Breast epithelium (tissue), 4 donors: ENCODE measurements at regions of chr15 and their contacts with region 1.

Region 1: GRCh38 chr15:89430530-89431341 is 65.6 kb downstream of the RHCG start:
- DNase-seq: peak; percentile 64 to 91
- H3K4me3 ChIP-seq: peak overlapping the region; percentile 26 to 50 (median 46)
- H3K27ac ChIP-seq: no peak overlapping the region
- H3K4me1 ChIP-seq: no peaks in the 10 kb centered on the region
- H3K27me3 ChIP-seq: peaks cover 0 to 6% of the 10 kb centered on the region in 2 donors
- CTCF ChIP-seq: peak; percentile 94 to 99 (median 97)
- POLR2A ChIP-seq: no peak

Region 2: GRCh38 chr15:88881775-88882174 is 549.0 kb before region 1 on chr15:
- intact Hi-C with region 1: loop called (anchors 2 kb)
- DNase-seq: no peak
- H3K4me3 ChIP-seq: no peak overlapping the region
- H3K27ac ChIP-seq: no peak overlapping the region
- H3K4me1 ChIP-seq: no peaks in the 10 kb centered on the region
- H3K27me3 ChIP-seq: no peaks in the 10 kb centered on the region
- CTCF ChIP-seq: no peak
- POLR2A ChIP-seq: no peak

Region 3: DNA sequence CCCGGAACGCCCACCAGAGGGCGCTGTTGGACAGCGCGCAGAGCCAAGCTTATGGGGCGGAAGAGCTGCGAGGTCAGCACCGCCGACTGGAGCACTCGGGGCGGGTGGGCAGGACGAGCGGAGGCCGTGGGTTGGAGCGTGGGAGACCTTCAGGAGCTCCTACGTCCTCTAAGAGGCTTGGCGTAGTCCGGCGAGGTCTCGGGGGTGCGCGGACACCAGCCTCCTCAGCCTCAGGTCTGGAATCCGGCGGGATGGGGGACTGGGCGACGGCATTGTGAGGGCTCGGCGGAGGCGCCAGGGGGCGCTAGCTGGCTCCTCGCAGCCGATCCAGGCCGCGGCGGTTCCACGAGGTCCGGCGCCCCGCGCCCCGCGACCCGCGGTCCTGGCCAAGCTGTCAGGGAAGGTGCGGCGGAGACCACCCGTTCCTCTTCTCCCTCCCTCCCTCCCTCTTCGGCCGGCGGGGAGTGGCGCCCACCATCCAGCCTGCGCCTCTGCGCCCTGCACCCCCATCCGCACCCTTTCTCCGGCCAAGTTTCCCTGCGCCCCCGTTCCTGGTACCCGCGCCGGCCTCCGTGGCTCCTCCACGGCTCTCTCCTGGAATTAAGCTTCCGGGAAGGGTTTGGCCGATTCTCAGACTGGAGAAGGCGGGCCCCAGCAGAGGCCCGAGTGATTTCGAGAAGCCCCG is 71.8 kb before region 1 on chr15:
- intact Hi-C with region 1: loop called (anchors 5 kb)
- DNase-seq: peak; percentile 45 to 76
- H3K4me3 ChIP-seq: peak overlapping the region; percentile 35 to 65 (median 44)
- H3K27ac ChIP-seq: no peak overlapping the region
- H3K4me1 ChIP-seq: peaks cover 5 to 7% of the 10 kb centered on the region in 2 donors
- H3K27me3 ChIP-seq: peaks cover 25 to 95% of the 10 kb centered on the region in 2 donors
- CTCF ChIP-seq: peak; percentile 96 to 98 (median 97)
- POLR2A ChIP-seq: no peak

Region 4: GRCh38 chr15:89416141-89416853 is 14.4 kb before region 1 on chr15:
- intact Hi-C with region 1: no loop called
- DNase-seq: no peak
- H3K4me3 ChIP-seq: no peak overlapping the region
- H3K27ac ChIP-seq: no peak overlapping the region
- H3K4me1 ChIP-seq: peaks cover 0 to 3% of the 10 kb centered on the region in 2 donors
- H3K27me3 ChIP-seq: peaks cover 3 to 90% of the 10 kb centered on the region in 2 donors
- CTCF ChIP-seq: peak in 2 of 3 donors; percentile 45 to 51
- POLR2A ChIP-seq: no peak

Region 5: DNA sequence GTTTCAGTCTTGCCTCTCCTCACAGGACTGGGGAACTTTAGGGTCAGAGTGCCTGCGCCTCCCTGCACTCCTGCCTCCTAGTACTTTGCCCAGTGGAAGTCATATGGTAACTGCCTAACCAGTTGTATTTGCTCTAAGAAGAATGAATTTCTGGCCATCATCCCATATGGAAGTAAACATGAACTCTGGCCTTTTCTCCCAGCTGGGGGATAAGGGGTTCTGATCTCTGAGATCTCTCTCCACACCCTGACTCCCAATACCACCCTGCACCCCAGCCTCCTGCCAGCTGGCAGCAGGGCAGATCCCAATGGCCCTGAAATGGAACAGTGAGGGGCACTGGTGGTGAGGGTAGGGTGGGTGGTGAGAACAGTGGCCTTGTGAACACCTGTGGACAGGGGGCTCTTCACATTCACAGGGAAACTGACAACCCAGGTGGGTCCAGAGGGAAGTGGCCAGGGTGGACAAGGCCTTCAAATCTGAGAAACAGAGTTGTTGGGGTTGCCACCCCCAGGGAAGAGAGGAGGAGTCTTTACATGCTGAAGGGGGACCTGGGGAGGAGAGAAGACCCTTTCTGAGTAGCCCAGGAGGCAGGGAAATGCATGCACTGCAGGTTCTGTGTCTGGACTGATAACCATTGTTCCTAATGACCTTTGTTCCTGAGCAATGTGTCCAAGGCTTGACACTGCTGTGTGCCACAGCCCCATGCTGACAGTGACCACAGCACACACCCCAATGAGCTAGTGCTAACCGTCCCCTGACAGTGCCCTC is 28.7 kb after region 1 on chr15:
- intact Hi-C with region 1: loop called (anchors 1 kb)
- DNase-seq: no peak
- H3K4me3 ChIP-seq: no peak overlapping the region
- H3K27ac ChIP-seq: no peak overlapping the region
- H3K4me1 ChIP-seq: no peaks in the 10 kb centered on the region
- H3K27me3 ChIP-seq: no peaks in the 10 kb centered on the region
- CTCF ChIP-seq: no peak
- POLR2A ChIP-seq: no peak